Activated CD4-positive, alpha-beta T cell treated with anti-CD3 and anti-CD28 coated beads for 36 hours (primary cell): ENCODE measurements at regions of chr4 and their contacts with region 1.

Region 1: GRCh38 chr4:15882675-15883086 is 55.9 kb downstream of the FGFBP1 start:
- DNase-seq: peak; percentile 63
- ATAC-seq: peak; percentile 86
- H3K4me3 Mint-ChIP-seq: no peak overlapping the region
- H3K27ac Mint-ChIP-seq: no peak overlapping the region
- H3K4me1 Mint-ChIP-seq: no peaks in the 10 kb centered on the region
- H3K27me3 Mint-ChIP-seq: peaks cover 2% of the 10 kb centered on the region

Region 2: DNA sequence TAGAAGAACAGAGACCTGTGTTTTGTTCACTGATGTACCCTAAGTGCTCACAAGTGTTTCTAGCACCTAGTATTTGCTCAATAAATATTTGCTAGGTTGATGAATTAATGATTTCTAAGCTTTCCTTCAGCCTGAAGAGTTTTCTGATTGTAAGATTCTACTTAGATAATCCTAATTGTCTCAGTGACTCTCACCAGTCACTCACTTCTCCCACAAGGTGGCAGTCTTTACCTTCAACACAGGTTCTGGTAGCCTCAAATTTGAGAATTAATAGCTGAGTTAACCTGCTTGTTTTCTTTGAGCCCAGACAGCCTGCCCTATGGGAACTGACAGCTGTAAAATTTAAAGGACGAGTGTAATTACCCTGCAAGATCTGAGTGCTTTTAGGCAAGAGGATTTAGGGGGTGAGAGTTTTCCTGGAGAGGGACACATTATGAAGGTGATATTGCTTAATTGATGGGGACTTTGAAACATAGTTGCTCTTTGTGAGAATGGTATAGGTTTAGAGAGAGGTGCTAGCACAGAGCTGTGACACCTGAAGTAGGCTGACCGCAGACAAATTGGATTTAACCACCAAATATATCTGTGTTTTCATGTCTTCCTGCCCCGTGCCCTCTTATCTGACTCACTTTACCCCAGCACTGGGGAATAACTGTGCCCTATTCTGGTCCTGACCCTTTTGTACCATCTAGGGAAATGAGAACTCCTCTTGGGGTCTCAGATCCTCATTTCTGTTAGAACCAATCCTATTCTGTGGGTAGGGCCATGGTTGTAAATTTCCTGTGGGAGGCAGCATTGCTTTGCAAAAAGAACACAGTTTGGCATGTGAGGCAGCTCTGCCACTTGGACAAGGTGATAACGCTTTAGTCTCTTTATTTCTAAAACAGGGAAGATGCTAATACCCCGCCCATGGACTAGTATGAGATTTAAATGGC is 76.8 kb before region 1 on chr4:
- CTCF ChIA-PET with region 1: interaction called, 82 read pairs
- POLR2A ChIA-PET with region 1: no interaction called
- intact Hi-C with region 1: loop called (anchors 1 to 5 kb)
- DNase-seq: peak; percentile 60
- ATAC-seq: peak; percentile 82
- H3K4me3 Mint-ChIP-seq: no peak overlapping the region
- H3K27ac Mint-ChIP-seq: no peak overlapping the region
- H3K4me1 Mint-ChIP-seq: peaks cover 38% of the 10 kb centered on the region
- H3K27me3 Mint-ChIP-seq: no peaks in the 10 kb centered on the region

Region 3: GRCh38 chr4:15893962-15894361 is 11.3 kb after region 1 on chr4:
- CTCF ChIA-PET with region 1: interaction called, 15 read pairs
- POLR2A ChIA-PET with region 1: no interaction called
- intact Hi-C with region 1: no loop called
- DNase-seq: no peak
- ATAC-seq: no peak
- H3K4me3 Mint-ChIP-seq: no peak overlapping the region
- H3K27ac Mint-ChIP-seq: no peak overlapping the region
- H3K4me1 Mint-ChIP-seq: no peaks in the 10 kb centered on the region
- H3K27me3 Mint-ChIP-seq: peaks cover 16% of the 10 kb centered on the region

Region 4: GRCh38 chr4:15956179-15956850 is 73.6 kb after region 1 on chr4:
- CTCF ChIA-PET with region 1: interaction called, 72 read pairs
- POLR2A ChIA-PET with region 1: no interaction called
- intact Hi-C with region 1: loop called (anchors 1 kb)
- DNase-seq: peak; percentile 92
- ATAC-seq: peak; percentile 93
- H3K4me3 Mint-ChIP-seq: no peak overlapping the region
- H3K27ac Mint-ChIP-seq: no peak overlapping the region
- H3K4me1 Mint-ChIP-seq: peaks cover 5% of the 10 kb centered on the region
- H3K27me3 Mint-ChIP-seq: no peaks in the 10 kb centered on the region

Region 5: DNA sequence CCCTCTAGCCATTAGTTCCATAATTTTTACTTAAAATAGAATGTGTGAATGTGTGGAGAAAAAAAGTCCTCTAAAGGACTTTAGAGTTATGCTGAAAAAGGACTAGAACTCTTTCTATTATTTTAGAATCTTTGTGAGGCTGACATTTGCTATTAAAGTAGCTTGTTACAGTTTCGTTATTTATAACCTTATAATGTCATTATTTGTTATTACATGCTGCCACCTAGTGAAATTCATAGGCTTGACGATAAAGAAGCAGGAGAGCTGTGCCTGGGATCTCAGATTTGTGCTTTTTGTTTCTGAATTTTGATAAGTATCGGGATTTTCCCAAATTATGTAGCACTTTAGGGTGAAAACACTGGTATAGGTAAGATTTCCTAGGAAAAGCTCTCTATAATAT is 382.1 kb after region 1 on chr4:
- CTCF ChIA-PET with region 1: interaction called, 9 read pairs
- POLR2A ChIA-PET with region 1: no interaction called
- intact Hi-C with region 1: loop called (anchors 2 to 10 kb)
- DNase-seq: no peak
- ATAC-seq: peak; percentile 66
- H3K4me3 Mint-ChIP-seq: no peak overlapping the region
- H3K27ac Mint-ChIP-seq: no peak overlapping the region
- H3K4me1 Mint-ChIP-seq: peaks cover 19% of the 10 kb centered on the region
- H3K27me3 Mint-ChIP-seq: no peaks in the 10 kb centered on the region